Activated naive CD4-positive, alpha-beta T cell treated with anti-CD3 and anti-CD28 coated beads for 36 hours (primary cell): ENCODE measurements at regions of chr1 and their contacts with region 1.

Region 1: GRCh38 chr1:112651205-112651604 is 23.3 kb upstream of the MOV10 start:
- DNase-seq: no peak
- H3K4me3 Mint-ChIP-seq: no peak overlapping the region
- H3K27ac Mint-ChIP-seq: peak overlapping the region; percentile 57
- H3K4me1 Mint-ChIP-seq: peaks cover 15% of the 10 kb centered on the region
- H3K27me3 Mint-ChIP-seq: no peaks in the 10 kb centered on the region

Region 2: DNA sequence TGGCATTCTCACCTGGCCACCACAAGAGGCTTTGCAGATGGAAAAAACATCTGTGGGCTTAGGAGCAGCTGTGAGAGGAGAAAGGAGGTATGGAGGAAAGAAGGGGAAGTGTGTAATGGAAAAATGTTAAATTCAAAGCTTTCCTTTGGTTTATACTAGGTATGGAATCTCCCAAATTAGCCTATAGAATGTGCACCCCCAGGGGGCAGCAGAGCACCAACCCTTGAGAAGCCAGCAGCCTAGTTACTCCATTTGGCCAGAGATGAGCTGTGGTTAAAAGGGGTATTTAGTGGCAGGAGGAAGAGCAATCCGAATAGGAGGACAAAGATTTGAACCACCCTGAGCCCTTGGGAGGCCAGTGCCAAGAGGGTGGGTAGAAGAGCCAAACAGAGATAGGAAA is 352.6 kb before region 1 on chr1:
- CTCF ChIA-PET with region 1: no interaction called
- intact Hi-C with region 1: no loop called
- DNase-seq: peak; percentile 65
- H3K4me3 Mint-ChIP-seq: no peak overlapping the region
- H3K27ac Mint-ChIP-seq: no peak overlapping the region
- H3K4me1 Mint-ChIP-seq: no peaks in the 10 kb centered on the region
- H3K27me3 Mint-ChIP-seq: peaks cover 11% of the 10 kb centered on the region

Region 3: DNA sequence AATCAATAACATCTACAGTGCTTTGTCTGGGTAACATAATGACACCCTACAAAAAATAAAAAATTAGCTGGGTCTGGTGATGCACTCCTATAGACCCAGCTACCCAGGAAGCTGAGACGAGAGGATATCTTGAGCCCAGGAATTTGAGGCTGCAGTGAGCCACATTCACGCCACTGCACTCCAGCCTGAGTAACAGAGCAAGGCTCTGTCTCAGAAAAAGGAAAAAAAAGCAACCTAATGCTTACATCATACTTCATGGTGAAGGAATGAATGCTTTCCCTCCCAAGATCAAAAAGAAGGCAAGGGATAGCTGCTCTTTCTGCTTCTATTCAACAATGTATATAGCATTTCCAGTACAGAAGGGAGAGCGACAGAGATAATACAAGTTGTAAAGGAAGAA is 279.4 kb before region 1 on chr1:
- CTCF ChIA-PET with region 1: no interaction called
- intact Hi-C with region 1: no loop called
- DNase-seq: no peak
- H3K4me3 Mint-ChIP-seq: no peak overlapping the region
- H3K27ac Mint-ChIP-seq: no peak overlapping the region
- H3K4me1 Mint-ChIP-seq: peaks cover 3% of the 10 kb centered on the region
- H3K27me3 Mint-ChIP-seq: peaks cover 28% of the 10 kb centered on the region

Region 4: GRCh38 chr1:112565800-112566199 is 85.4 kb before region 1 on chr1:
- CTCF ChIA-PET with region 1: no interaction called
- intact Hi-C with region 1: no loop called
- DNase-seq: no peak
- H3K4me3 Mint-ChIP-seq: no peak overlapping the region
- H3K27ac Mint-ChIP-seq: no peak overlapping the region
- H3K4me1 Mint-ChIP-seq: no peaks in the 10 kb centered on the region
- H3K27me3 Mint-ChIP-seq: no peaks in the 10 kb centered on the region

Region 5: DNA sequence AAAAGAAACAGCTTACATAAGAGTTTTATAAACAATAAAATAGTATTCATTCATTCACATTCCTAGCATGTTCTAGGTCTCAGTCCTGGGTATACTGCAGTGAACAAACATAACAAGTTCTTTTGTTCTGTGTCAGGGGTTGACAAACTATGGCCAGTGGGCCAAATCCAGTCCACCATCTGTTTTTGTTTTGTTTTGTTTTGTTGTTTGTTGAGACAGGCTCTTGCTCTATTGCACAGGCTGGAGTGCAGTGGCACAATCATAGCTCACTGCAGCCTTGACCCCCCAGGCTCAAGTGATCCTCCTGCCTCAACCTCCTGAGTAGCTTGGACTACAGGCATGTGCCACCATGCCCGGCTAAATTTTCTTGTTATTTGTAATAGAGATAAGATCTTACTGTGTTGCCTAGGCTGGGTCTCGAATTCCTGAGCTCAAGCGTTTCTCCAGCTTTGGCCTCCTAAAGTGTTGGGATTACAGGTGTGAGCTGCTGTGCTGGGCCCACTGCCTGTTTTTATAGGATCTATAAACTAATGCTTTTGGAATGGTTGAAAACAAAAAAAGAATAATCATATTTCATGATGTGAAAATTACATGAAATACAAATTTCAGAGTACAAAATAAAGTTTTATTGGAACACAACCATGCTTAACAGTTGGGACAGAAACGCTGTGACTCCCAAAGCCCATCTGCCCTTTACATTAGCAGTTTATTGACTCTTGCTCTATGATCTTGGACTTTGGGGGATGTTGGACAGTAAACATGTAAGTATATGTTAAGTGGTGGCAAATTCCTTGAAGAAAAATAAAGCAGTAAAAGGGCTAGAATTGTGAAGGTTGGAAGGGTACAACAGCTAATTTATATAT is 13.7 kb before region 1 on chr1:
- CTCF ChIA-PET with region 1: interaction called, 4 read pairs
- intact Hi-C with region 1: loop called (anchors 2 kb)
- DNase-seq: no peak
- H3K4me3 Mint-ChIP-seq: no peak overlapping the region
- H3K27ac Mint-ChIP-seq: no peak overlapping the region
- H3K4me1 Mint-ChIP-seq: peaks cover 52% of the 10 kb centered on the region
- H3K27me3 Mint-ChIP-seq: no peaks in the 10 kb centered on the region